ENCODE measurements at regions of chr22 and their contacts with region 1.

Region 1: GRCh38 chr22:36123673-36124630 is 36.6 kb downstream of the APOL3 start:
- DNase-seq: peak; percentile 98
- H3K4me3 Mint-ChIP-seq: peak overlapping the region; percentile 71
- H3K27ac Mint-ChIP-seq: peak overlapping the region; percentile 82
- H3K4me1 Mint-ChIP-seq: peaks cover 8% of the 10 kb centered on the region
- H3K27me3 Mint-ChIP-seq: peaks cover 8% of the 10 kb centered on the region

Region 2: GRCh38 chr22:35930933-35931332 is 193.0 kb before region 1 on chr22:
- intact Hi-C with region 1: loop called (anchors 2 kb)
- DNase-seq: no peak
- H3K4me3 Mint-ChIP-seq: no peak overlapping the region
- H3K27ac Mint-ChIP-seq: no peak overlapping the region
- H3K4me1 Mint-ChIP-seq: no peaks in the 10 kb centered on the region
- H3K27me3 Mint-ChIP-seq: peaks cover 10% of the 10 kb centered on the region

Region 3: DNA sequence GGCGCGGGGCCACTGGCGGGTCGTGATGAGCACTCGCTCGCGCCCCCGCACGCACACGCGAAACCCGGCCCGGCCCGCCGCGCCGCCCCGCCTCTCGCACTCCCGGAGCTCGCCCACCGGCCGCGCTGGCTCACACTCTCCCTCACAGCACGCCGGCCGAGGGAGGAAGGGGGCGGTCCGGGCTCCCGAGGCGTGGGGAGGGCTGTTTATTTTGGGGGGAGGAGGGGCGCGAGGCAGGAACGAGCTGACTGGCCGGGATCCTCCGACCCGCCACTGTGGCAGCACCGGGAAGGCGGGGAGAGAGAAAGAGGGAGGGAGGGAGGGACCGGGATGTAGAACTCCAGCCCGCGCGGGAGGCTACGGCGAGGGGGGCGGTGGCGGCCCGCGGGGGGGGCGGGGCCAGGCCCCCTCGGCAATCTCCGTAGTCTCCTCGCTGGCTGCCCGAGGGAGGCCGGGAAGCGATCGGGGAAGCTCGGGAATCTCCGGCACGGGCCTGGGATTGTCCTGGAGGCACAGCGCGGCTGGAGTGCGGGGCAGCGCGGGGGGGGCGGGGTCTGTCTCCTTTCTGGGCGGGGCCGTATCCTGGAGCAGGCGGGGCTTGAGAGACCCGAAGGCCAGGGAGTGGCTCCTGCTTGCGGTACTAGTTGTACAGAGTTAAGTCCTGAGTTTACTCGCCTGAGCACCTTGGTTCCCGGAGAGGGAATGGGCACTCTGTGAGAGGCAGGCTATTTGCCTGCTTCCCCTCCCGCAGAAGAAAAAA is 95.1 kb before region 1 on chr22 and contains the start of gene RBFOX2:
- intact Hi-C with region 1: loop called (anchors 5 kb)
- DNase-seq: peak; percentile 91
- H3K4me3 Mint-ChIP-seq: peak within 1 kb of the TSS; percentile 89
- H3K27ac Mint-ChIP-seq: peak within 1 kb of the TSS; percentile 70
- H3K4me1 Mint-ChIP-seq: peaks cover 14% of the 10 kb centered on the region
- H3K27me3 Mint-ChIP-seq: peaks cover 46% of the 10 kb centered on the region
- total RNA-seq, gene RBFOX2: 3.6 and 3.9 TPM in 2 replicates

Region 4: DNA sequence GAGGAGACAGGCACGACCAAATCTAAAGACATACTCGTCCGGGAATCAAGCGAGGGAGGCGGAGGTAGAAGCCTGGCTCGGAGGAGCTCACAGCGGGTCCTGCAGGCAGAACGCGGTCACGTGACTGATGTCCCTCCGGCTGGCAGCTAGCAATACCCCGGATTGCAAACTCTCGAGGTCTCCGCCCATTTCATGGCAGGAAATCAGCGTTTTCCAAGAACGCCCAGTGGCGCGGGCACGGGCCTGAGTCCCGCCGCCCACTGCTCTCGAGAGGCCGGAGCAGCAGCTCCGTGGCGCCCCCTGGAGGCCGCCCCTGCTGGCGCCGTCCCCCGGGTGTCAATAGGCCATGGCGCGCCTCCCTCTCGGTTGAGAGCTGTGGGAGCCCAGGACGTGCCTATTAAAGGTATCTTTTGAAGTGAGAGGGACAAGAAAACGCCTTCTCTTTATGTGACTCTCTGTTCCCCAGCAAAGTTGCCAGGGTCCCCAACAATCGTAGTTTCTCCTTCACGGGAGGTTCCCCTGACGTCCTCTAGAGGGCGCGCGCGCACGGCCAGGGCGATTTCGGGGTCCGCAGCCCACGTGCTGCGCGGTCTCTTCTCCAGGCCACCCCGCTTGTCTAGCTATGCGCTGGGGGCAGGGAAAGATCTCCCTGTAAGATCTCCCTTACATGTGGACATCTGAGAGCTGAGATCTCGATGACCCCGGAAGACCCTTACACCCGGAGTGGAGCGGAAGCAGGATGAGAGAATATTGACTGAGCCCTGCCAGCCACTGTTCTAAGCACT is 58.0 kb before region 1 on chr22:
- intact Hi-C with region 1: loop called (anchors 5 kb)
- DNase-seq: peak; percentile 90
- H3K4me3 Mint-ChIP-seq: peak overlapping the region; percentile 84
- H3K27ac Mint-ChIP-seq: peak overlapping the region; percentile 89
- H3K4me1 Mint-ChIP-seq: peaks cover 8% of the 10 kb centered on the region
- H3K27me3 Mint-ChIP-seq: peaks cover 15% of the 10 kb centered on the region

Region 5: GRCh38 chr22:36097880-36098279 is 26.1 kb before region 1 on chr22:
- intact Hi-C with region 1: no loop called
- DNase-seq: no peak
- H3K4me3 Mint-ChIP-seq: no peak overlapping the region
- H3K27ac Mint-ChIP-seq: no peak overlapping the region
- H3K4me1 Mint-ChIP-seq: no peaks in the 10 kb centered on the region
- H3K27me3 Mint-ChIP-seq: peaks cover 8% of the 10 kb centered on the region

Measured in activated CD4-positive, alpha-beta T cell treated with anti-CD3 and anti-CD28 coated beads, Interleukin-2, amount 10 ng/mL, durations not matched to agents 24 days and 14 days (primary cell).